Activated CD4-positive, alpha-beta T cell treated with anti-CD3 and anti-CD28 coated beads for 36 hours (primary cell): ENCODE measurements at regions of chr4 and their contacts with region 1.

Region 1: DNA sequence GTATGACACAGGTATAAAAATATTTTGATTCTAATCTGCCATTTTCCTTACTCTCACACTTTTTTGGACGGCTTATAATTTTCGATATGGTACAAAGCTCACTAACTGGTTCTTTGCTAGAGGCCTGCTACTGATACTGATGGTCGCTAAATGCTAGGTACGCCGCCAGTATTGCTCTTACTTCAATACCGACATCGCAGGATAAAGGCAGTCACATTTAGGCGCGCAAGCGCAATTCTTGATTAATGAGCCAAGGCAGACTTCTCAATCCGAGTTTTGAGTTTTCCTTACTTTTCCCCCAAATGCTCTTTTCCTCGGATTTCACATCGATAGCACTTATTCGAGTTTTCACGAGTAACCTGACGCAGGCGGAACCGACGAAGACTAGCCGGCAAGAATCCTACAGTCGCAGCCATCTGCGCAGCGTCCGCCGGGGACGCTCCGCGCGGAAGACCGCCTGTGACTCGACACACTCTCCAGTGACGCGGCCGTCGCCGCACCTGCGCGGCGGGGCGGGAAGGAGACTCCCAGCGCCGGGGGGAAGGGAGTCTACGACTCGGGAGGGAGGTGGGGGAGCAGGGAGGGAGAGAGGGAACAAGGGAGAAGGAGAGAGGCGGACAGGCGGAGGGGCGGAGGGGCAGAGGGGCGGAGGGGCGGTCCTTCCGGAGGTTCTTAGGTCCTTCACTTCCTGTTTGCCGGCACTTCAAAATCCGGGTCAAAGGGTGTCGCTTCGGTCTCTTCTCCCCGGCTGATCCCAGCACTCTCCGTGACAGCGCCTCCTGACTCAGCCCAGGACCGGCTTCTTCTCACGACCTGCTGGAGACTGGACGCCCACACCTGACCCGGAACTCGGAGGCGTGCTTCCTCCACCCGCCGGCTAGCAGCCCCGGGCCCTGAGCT is at the start of gene USP38:
- DNase-seq: peak; percentile 95
- ATAC-seq: peak; percentile 90
- H3K4me3 Mint-ChIP-seq: peak within 1 kb of the TSS; percentile 85
- H3K27ac Mint-ChIP-seq: peak within 1 kb of the TSS; percentile 97
- H3K4me1 Mint-ChIP-seq: peaks cover 38% of the 10 kb centered on the region
- H3K27me3 Mint-ChIP-seq: no peaks in the 10 kb centered on the region
- total RNA-seq, gene USP38: 17.4 to 20.0 TPM

Region 2: DNA sequence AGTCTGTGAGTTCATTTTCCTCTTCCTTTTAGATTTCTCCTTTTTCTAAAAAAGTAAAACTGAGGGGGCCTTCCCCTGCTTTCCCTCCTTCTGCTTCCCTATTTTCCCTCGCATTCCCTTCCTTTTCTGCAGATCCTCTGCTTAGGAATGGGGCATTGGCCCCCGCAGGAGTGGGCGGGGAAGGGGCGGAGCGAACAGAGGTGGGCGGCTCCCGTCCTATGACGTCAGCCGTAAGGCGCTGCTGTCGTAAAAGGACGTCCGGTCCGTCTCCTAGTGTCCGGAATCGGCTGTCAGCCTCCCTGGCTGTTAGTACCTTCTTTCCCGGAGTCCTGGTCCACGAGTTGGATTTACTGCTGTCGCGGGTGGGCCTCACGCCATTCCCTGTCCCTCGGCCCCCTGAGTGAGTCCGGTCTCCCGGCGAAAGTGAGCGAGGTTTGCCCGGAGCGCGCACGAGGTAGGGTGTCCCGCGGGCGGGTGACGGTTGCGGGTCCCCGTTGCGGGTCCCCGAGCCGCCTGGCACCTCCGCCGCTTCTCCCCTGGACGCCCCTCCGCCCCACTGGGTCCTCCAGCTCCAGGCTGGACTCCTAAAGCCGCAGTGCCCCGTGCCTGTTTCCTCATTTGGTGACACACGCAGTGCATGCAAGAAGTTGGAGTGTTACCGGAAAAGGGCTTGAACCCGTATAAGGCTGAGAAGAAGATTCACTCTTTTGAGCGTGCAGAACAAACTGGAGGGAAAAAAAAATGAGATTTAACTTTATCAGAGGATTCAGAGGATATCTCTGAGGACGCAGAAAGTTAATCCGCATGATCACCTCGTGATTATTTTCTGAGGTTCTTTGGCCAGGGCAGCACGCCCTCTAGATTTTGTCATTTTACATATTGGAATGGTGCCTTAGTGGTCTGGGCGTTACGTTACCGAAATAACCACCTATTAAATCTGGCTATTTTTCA is 1963.5 kb before region 1 on chr4 and contains the start of gene ZNF330:
- CTCF ChIA-PET with region 1: no interaction called
- POLR2A ChIA-PET with region 1: no interaction called
- intact Hi-C with region 1: loop called (anchors 2 to 10 kb)
- DNase-seq: peak; percentile 93
- ATAC-seq: peak; percentile 85
- H3K4me3 Mint-ChIP-seq: peak within 1 kb of the TSS; percentile 92
- H3K27ac Mint-ChIP-seq: peak within 1 kb of the TSS; percentile 97
- H3K4me1 Mint-ChIP-seq: peaks cover 41% of the 10 kb centered on the region
- H3K27me3 Mint-ChIP-seq: no peaks in the 10 kb centered on the region
- total RNA-seq, gene ZNF330: 40.5 to 65.7 TPM

Region 3: GRCh38 chr4:142282870-142283431 is 901.5 kb before region 1 on chr4:
- CTCF ChIA-PET with region 1: no interaction called
- POLR2A ChIA-PET with region 1: no interaction called
- intact Hi-C with region 1: loop called in 1 of 2 experiments (anchors 10 kb)
- DNase-seq: no peak
- ATAC-seq: no peak
- H3K4me3 Mint-ChIP-seq: no peak overlapping the region
- H3K27ac Mint-ChIP-seq: no peak overlapping the region
- H3K4me1 Mint-ChIP-seq: peaks cover 23% of the 10 kb centered on the region
- H3K27me3 Mint-ChIP-seq: no peaks in the 10 kb centered on the region

Region 4: DNA sequence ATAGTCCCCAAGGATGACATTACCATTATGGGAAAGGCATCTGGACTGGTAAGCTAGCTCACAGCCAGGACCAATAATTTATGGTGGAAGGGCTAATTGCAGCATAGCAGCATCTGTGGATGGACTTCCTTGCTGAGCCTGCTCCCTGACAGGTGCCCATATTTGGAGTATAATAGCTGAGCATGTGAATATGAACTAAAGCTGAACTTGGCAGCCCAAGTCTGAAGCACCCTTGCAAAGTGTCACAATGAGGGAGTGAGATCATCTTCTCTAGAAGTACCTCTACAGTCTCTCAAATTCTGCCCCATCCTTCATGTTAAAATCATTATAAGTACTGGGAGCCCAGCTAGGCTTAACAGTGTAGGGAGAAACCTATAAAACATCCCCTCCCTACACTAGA is 210.1 kb before region 1 on chr4:
- CTCF ChIA-PET with region 1: no interaction called
- POLR2A ChIA-PET with region 1: no interaction called
- intact Hi-C with region 1: no loop called
- DNase-seq: no peak
- ATAC-seq: no peak
- H3K4me3 Mint-ChIP-seq: no peak overlapping the region
- H3K27ac Mint-ChIP-seq: no peak overlapping the region
- H3K4me1 Mint-ChIP-seq: no peaks in the 10 kb centered on the region
- H3K27me3 Mint-ChIP-seq: peaks cover 14% of the 10 kb centered on the region

Region 5: DNA sequence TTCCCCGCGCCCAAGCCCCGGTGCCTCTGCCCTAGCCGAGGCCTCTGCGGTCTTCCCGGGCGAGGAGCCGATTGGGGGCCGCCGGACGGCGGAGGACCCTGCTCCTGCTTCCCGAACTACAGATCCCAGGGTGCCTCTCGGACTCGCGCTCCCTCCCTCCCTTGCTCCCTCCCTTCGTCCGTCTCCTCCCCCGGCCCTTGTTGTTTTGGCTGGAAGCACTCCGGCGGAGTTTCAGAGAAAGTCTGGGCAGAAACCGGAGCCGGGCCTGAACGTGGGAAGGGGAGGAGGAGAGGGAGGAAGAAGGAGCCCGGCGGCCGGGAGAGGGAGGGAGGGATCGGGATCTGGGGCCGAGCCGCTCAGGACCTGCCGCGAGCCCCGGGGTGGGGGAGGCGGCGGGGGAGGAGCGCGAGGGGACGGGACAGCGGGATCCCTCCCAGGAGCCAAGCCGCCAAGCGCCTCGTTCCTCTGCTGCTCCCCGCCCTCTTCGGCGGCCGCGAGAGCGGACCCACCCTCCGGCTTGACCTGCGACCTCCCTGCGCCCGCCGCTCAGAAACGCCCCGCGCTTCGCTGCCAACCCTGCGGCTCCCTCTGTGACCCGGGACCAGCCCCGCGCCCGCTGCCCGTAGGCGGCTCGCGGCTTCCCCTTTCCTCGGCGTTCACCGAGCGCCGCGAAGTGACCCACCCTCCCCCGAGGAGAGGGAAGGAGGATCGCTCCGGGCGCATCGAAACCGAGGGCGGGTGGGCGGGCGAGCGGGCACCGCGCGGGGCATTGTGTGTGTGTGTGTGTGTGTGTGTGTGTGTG is 151.7 kb after region 1 on chr4:
- CTCF ChIA-PET with region 1: no interaction called
- POLR2A ChIA-PET with region 1: no interaction called
- intact Hi-C with region 1: loop called (anchors 2 to 5 kb)
- DNase-seq: peak; percentile 46
- ATAC-seq: peak; percentile 51
- H3K4me3 Mint-ChIP-seq: peak overlapping the region; percentile 76
- H3K27ac Mint-ChIP-seq: no peak overlapping the region
- H3K4me1 Mint-ChIP-seq: peaks cover 8% of the 10 kb centered on the region
- H3K27me3 Mint-ChIP-seq: peaks cover 36% of the 10 kb centered on the region

Region 6: DNA sequence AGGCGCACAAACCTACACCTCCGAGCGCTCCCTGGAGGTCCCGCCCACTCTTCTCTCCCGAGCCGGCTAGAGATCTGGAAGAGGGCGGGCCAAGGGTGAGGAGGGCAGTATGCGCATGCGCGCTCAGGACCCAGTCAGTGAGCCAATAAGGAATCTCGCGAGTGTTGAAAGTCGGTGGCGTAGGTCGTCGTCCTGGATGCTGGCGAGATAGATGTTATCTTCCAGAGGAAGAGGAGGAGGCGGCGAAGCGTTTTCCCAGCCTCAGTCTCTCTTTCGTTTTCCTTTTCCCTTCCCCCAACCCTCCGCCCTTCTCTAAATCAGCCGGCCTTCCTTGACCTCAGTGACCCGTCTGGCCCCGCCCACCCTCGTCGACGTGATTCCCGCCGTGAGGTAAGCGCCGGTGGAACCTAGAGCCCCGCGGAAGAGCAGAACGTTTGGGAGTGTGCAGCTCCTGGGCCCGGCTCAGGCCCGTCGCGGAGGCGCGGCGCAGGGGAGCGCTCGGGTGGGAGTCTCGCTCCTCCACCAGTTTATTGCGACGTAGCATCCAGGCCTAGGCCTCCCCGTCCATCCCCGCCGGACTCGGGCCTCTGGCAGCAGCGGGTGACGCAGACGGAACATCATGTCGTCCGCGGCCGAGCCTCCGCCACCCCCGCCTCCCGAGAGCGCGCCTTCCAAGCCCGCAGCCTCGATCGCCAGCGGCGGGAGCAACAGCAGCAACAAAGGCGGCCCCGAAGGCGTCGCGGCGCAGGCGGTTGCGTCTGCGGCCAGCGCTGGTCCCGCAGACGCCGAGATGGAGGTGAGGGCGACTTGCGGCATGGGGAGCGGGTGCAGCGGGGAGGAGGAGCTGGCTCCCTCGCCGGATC is 329.1 kb after region 1 on chr4 and contains the start of gene SMARCA5:
- CTCF ChIA-PET with region 1: no interaction called
- POLR2A ChIA-PET with region 1: no interaction called
- intact Hi-C with region 1: loop called (anchors 1 kb)
- DNase-seq: peak; percentile 97
- ATAC-seq: peak; percentile 85
- H3K4me3 Mint-ChIP-seq: peak within 1 kb of the TSS; percentile 100
- H3K27ac Mint-ChIP-seq: peak within 1 kb of the TSS; percentile 99
- H3K4me1 Mint-ChIP-seq: peaks cover 29% of the 10 kb centered on the region
- H3K27me3 Mint-ChIP-seq: no peaks in the 10 kb centered on the region
- total RNA-seq, gene SMARCA5: 66.6 to 69.8 TPM